GM12878 (cell line): ENCODE measurements at regions of chr18 and their contacts with region 1.

Region 1: DNA sequence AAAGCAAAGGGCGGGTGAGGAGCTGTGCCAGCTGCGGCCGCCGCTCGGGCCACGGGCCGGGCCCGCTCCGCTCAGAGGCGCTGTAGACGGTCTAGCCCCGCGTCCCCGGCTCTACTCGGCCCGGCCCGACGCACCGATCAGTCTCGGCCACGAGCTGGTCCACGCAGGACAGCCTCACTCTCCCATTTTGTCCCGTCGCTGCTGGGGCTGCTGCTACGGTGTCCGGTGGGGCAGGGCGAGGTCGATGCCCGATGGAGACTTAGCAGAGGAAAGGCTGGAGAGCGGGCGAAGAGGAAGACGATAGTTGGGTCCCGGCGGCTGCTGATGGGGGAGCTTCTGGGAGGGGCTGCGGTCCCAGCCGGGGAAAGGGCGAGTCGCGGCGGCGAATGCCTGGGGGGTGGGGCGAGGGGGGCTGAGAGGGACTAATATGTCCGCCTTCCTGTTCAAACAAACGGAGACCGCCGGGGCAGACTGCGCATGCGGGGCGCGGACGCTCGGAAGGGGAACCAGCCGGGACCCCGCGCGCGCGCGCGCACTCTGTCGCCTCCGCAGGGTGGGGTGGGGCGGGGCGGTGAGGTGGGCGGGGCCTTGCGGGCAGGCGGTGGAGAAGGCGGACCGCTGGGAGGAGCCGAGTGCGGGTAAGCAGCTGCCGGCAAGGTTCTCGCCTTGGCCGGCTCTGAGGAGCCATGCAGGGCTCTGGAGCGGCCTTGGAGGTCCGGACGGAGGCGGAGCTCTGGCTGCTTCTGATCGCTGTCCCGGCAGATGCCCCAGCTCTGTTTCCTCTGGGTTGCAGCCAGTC is at the start of gene ROCK1:
- DNase-seq: peak; percentile 65
- ATAC-seq: peak; percentile 91
- H3K4me3 ChIP-seq: peak within 1 kb of the TSS; percentile 92
- H3K27ac ChIP-seq: peak within 1 kb of the TSS; percentile 96
- H3K4me1 ChIP-seq: no peaks in the 10 kb centered on the region
- H3K27me3 ChIP-seq: no peaks in the 10 kb centered on the region
- CTCF ChIP-seq: no peak
- EP300 ChIP-seq: no peak
- POLR2A ChIP-seq: peak; percentile 73; the same call in 1 of the 2 replicates
- RAD21 ChIP-seq: no peak
- polyA plus RNA-seq, gene ROCK1: 14.8 to 15.1 TPM

Region 2: GRCh38 chr18:21004726-21005125 is 106.8 kb before region 1 on chr18:
- CTCF ChIA-PET with region 1: no interaction called
- POLR2A ChIA-PET with region 1: no interaction called
- RAD21 ChIA-PET with region 1: no interaction called
- SMC1A ChIA-PET with region 1: interaction called, 3 read pairs
- in situ Hi-C with region 1: no loop called
- intact Hi-C with region 1: loop called (anchors 5 kb)
- DNase-seq: no peak
- ATAC-seq: no peak
- H3K4me3 ChIP-seq: no peak overlapping the region
- H3K27ac ChIP-seq: no peak overlapping the region
- H3K4me1 ChIP-seq: no peaks in the 10 kb centered on the region
- H3K27me3 ChIP-seq: no peaks in the 10 kb centered on the region
- CTCF ChIP-seq: no peak
- EP300 ChIP-seq: no peak
- POLR2A ChIP-seq: no peak
- RAD21 ChIP-seq: no peak

Region 3: DNA sequence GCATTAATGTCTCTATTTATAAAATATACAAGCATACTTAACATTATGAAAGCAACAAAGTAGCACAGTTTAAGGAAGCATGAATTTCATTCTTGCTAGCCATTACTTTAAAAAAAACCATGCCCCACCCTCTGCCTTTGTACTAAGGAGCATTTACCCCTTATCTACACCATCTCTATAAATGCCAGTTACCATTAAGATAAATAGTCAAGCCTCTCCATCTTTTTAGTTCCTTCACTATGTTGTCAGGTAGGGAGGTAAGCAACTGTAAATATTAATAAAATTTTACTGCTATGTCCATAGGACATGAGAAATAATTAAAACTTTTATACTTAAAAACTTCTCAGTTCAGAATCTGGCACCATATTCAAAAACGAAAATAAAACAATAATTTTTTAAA is 42.1 kb before region 1 on chr18:
- CTCF ChIA-PET with region 1: no interaction called
- POLR2A ChIA-PET with region 1: no interaction called
- RAD21 ChIA-PET with region 1: no interaction called
- SMC1A ChIA-PET with region 1: interaction called, 3 read pairs
- in situ Hi-C with region 1: no loop called
- intact Hi-C with region 1: loop called (anchors 5 kb)
- DNase-seq: no peak
- ATAC-seq: no peak
- H3K4me3 ChIP-seq: no peak overlapping the region
- H3K27ac ChIP-seq: no peak overlapping the region
- H3K4me1 ChIP-seq: no peaks in the 10 kb centered on the region
- H3K27me3 ChIP-seq: no peaks in the 10 kb centered on the region
- CTCF ChIP-seq: no peak
- EP300 ChIP-seq: no peak
- POLR2A ChIP-seq: no peak
- RAD21 ChIP-seq: no peak

Region 4: DNA sequence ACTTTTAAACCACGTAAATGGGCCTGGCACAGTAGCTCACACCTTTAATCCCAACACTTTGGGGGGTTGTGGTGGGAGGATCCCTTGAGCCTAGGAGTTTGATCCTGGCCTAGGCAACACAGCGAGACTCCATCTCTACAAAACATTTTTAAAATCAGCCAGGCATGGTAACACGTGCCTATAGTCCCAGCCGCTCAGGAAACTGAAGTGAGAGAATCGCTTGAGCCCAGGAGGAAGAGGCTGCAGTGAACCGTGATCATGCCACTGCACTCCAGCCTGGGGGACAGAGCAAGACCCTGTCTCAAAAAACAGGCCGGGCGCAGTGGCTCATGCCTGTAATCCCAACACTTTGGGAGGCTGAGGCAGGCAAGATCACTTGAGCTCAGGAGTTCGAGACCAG is 12.1 kb before region 1 on chr18:
- CTCF ChIA-PET with region 1: interaction called, 5 read pairs
- POLR2A ChIA-PET with region 1: interaction called, 12 read pairs
- RAD21 ChIA-PET with region 1: interaction called, 3 read pairs
- SMC1A ChIA-PET with region 1: interaction called, 7 read pairs
- in situ Hi-C with region 1: no loop called
- intact Hi-C with region 1: no loop called
- DNase-seq: no peak
- ATAC-seq: peak; percentile 78
- H3K4me3 ChIP-seq: peak overlapping the region; percentile 52
- H3K27ac ChIP-seq: peak overlapping the region; percentile 42
- H3K4me1 ChIP-seq: peaks cover 6% of the 10 kb centered on the region
- H3K27me3 ChIP-seq: no peaks in the 10 kb centered on the region
- CTCF ChIP-seq: no peak
- EP300 ChIP-seq: no peak
- POLR2A ChIP-seq: no peak
- RAD21 ChIP-seq: no peak

Region 5: GRCh38 chr18:21242141-21242779 is 130.7 kb after region 1 on chr18 and contains the start of gene GREB1L:
- CTCF ChIA-PET with region 1: no interaction called
- POLR2A ChIA-PET with region 1: no interaction called
- RAD21 ChIA-PET with region 1: no interaction called
- SMC1A ChIA-PET with region 1: no interaction called
- in situ Hi-C with region 1: no loop called
- intact Hi-C with region 1: no loop called
- DNase-seq: no peak
- ATAC-seq: no peak
- H3K4me3 ChIP-seq: no peak within 1 kb of the TSS
- H3K27ac ChIP-seq: no peak within 1 kb of the TSS
- H3K4me1 ChIP-seq: no peaks in the 10 kb centered on the region
- H3K27me3 ChIP-seq: peaks cover 7 to 10% of the 10 kb centered on the region in 2 experiments
- CTCF ChIP-seq: no peak
- EP300 ChIP-seq: no peak
- POLR2A ChIP-seq: no peak
- RAD21 ChIP-seq: no peak
- polyA plus RNA-seq, gene GREB1L: under 0.01 to 0.03 TPM

Region 6: DNA sequence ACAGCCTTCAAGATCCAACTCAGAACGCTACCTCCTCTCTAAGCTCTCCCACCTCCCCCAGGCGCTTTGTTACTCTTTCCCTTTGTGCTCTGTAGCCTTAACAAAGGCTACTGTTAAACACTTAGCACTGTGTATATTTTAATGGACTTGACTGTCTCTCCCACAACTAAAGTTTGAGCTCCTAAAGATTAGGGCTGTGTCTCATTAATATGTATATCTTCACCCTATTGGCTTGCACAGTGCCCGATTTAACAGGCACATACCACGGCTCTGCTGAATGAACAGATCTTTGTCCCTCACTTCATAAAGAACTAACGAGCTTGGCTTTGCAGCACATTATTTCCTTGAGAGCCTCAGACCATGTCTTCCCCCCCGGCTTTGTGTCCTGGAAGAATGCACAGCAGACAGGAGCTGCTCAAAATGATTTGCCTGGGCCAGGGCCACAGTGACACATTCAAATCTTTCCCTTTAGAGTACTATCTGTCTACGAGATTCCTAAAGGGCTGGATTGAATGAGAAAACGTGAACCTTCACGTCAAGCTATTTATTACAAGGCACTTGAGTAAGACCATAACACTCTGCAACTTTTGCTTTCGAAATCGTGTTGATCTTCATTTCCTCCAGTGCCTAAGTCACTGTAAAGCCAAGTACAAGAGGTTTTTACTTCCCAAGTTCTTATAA is 571.0 kb after region 1 on chr18:
- CTCF ChIA-PET with region 1: interaction called, 3 read pairs
- POLR2A ChIA-PET with region 1: no interaction called
- RAD21 ChIA-PET with region 1: no interaction called
- SMC1A ChIA-PET with region 1: no interaction called
- in situ Hi-C with region 1: loop called (anchors 25 kb)
- intact Hi-C with region 1: no loop called
- DNase-seq: peak; percentile 39
- ATAC-seq: peak; percentile 32; the same call in 2 of the 3 replicates
- H3K4me3 ChIP-seq: no peak overlapping the region
- H3K27ac ChIP-seq: peak overlapping the region; percentile 70
- H3K4me1 ChIP-seq: peaks cover 23% of the 10 kb centered on the region
- H3K27me3 ChIP-seq: no peaks in the 10 kb centered on the region
- CTCF ChIP-seq: no peak
- EP300 ChIP-seq: no peak
- POLR2A ChIP-seq: no peak
- RAD21 ChIP-seq: no peak

Region 7: DNA sequence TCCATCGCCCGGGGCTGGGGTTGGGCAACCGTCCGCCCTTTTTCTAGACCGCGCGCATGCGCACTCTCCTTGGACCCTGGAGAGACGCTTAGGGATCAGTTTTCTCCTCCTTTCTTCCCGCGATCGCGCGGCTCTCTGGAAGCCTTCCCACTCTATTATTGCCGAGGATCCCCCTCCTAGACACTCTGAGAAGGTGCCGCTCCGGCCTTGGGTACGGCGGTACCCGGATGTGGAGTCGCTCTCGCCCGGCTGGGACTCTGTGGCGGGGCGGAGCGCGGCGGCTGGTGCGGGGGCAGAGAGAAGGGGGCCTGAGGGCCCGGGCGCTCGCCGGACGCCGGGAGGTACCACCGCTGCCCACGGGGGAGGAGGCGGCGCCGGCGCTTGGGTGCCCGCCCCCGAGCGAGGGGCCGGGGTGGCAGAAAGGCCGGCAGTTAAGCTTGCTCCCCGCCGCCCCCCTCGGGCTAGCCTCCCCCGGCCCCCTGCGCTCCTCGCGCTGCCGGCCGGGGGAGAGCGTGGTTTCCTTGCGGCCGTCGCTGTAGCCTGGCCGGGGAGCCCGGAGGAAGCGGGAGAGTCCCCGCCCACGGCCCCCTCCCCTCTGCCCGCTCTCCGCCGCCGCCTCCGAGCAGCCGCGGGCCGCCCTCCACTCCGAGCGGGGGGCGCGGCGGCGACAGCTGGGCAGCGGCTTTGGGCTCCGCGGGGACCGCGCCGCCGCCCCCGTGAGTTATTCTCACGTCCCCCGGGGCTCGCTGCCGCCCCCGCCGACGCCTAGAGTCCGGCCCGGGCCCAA is 629.4 kb after region 1 on chr18 and contains the start of gene MIB1:
- CTCF ChIA-PET with region 1: no interaction called
- POLR2A ChIA-PET with region 1: no interaction called
- RAD21 ChIA-PET with region 1: no interaction called
- SMC1A ChIA-PET with region 1: no interaction called
- in situ Hi-C with region 1: no loop called
- intact Hi-C with region 1: loop called (anchors 10 kb)
- DNase-seq: peak; percentile 83
- ATAC-seq: peak; percentile 85
- H3K4me3 ChIP-seq: peak within 1 kb of the TSS; percentile 96
- H3K27ac ChIP-seq: peak within 1 kb of the TSS; percentile 91
- H3K4me1 ChIP-seq: no peaks in the 10 kb centered on the region
- H3K27me3 ChIP-seq: no peaks in the 10 kb centered on the region
- CTCF ChIP-seq: no peak
- EP300 ChIP-seq: no peak
- POLR2A ChIP-seq: peak; percentile 64
- RAD21 ChIP-seq: no peak
- polyA plus RNA-seq, gene MIB1: 3.6 to 4.8 TPM

Region 8: GRCh38 chr18:22293417-22293816 is 1181.9 kb after region 1 on chr18:
- CTCF ChIA-PET with region 1: no interaction called
- POLR2A ChIA-PET with region 1: no interaction called
- RAD21 ChIA-PET with region 1: no interaction called
- SMC1A ChIA-PET with region 1: no interaction called
- in situ Hi-C with region 1: no loop called
- intact Hi-C with region 1: no loop called
- DNase-seq: no peak
- ATAC-seq: no peak
- H3K4me3 ChIP-seq: no peak overlapping the region
- H3K27ac ChIP-seq: no peak overlapping the region
- H3K4me1 ChIP-seq: no peaks in the 10 kb centered on the region
- H3K27me3 ChIP-seq: no peaks in the 10 kb centered on the region
- CTCF ChIP-seq: no peak
- EP300 ChIP-seq: no peak
- POLR2A ChIP-seq: no peak
- RAD21 ChIP-seq: no peak